Ovary (tissue), 10 donors: ENCODE measurements at regions of chr13 and their contacts with region 1.

Region 1: DNA sequence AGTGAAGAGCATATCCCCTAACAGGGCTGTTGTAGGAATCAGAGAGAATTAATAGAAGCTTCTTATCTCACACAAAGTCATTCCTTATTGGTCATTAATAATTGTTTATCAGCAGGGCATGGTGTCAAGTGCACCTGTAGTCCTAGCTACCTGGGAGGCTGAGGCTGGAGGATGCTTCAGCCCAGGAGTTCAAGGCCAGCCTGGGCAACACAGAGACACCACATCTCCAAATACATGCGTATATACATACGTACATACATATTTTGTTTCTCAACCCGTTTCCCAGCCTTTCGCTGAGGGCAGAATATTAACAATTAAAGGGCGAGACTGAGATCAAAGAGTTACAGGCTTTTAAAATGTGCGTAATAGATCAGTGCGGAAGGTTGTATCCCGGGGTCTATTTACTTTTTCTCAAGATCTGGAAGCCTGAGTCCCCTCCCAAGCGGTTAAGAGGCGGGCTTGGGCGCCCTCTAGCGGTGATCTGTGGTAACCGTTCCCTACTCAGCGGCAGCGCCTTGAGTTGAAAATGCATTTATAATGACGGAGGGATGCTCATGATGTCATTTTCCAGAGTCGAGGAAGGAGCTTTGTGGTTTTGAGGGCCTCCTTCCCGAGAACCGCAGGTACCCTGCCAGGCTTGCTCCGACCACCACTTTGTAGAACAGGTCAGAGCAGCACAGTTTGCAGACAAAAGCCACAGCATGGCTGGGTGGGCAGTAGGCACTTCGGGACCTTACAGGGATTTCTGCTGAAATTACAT is 169.6 kb upstream of the GPR12 start:
- DNase-seq: peak; percentile 53 to 81 (median 74)
- H3K4me3 ChIP-seq: no peak overlapping the region
- H3K27ac ChIP-seq: no peak overlapping the region
- H3K4me1 ChIP-seq: no peaks in the 10 kb centered on the region
- H3K27me3 ChIP-seq: no peaks in the 10 kb centered on the region
- CTCF ChIP-seq: peak; percentile 36 to 66 (median 56)
- EP300 ChIP-seq: no peak
- POLR2A ChIP-seq: no peak

Region 2: DNA sequence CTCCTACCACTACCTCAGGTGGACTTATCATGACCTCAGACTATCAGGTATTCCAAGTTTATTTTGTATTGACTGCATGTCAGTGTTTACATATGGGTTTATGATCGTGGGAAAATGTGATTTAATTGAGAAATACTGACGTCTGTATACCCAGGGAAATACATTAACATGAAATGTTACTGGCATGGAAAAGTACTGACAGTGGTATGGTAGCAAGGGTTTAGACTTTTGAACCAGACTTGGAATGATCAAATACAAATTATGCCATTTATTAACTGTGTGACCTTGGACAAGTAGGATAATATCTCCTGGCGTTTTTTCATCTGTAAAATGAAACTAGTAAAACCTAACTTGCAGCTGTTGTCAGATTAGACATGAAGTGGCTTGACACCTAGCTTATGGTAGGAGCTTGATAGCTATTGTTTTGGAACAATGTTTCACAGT is 528.6 kb before region 1 on chr13:
- intact Hi-C with region 1: no loop called
- DNase-seq: no peak
- H3K4me3 ChIP-seq: no peak overlapping the region
- H3K27ac ChIP-seq: no peak overlapping the region
- H3K4me1 ChIP-seq: no peaks in the 10 kb centered on the region
- H3K27me3 ChIP-seq: no peaks in the 10 kb centered on the region
- CTCF ChIP-seq: no peak
- EP300 ChIP-seq: no peak
- POLR2A ChIP-seq: no peak

Region 3: GRCh38 chr13:26653310-26653709 is 276.8 kb before region 1 on chr13:
- intact Hi-C with region 1: no loop called
- DNase-seq: no peak
- H3K4me3 ChIP-seq: no peak overlapping the region
- H3K27ac ChIP-seq: no peak overlapping the region
- H3K4me1 ChIP-seq: peaks cover 2% of the 10 kb centered on the region
- H3K27me3 ChIP-seq: no peaks in the 10 kb centered on the region
- CTCF ChIP-seq: no peak
- EP300 ChIP-seq: no peak
- POLR2A ChIP-seq: no peak

Region 4: GRCh38 chr13:26719356-26719945 is 210.7 kb before region 1 on chr13:
- intact Hi-C with region 1: loop called in 1 of 4 experiments (anchors 10 kb)
- DNase-seq: no peak
- H3K4me3 ChIP-seq: no peak overlapping the region
- H3K27ac ChIP-seq: no peak overlapping the region
- H3K4me1 ChIP-seq: no peaks in the 10 kb centered on the region
- H3K27me3 ChIP-seq: no peaks in the 10 kb centered on the region
- CTCF ChIP-seq: no peak
- EP300 ChIP-seq: no peak
- POLR2A ChIP-seq: no peak